Left cardiac atrium (tissue), 4 donors: ENCODE measurements at regions of chr18 and their contacts with region 1.

Region 1: GRCh38 chr18:48675352-48675761 is 136.5 kb downstream of the CTIF start:
- DNase-seq: peak; percentile 90
- ATAC-seq: peak; percentile 88 to 91

Region 2: GRCh38 chr18:48762836-48763718 is 87.7 kb after region 1 on chr18:
- intact Hi-C with region 1: no loop called
- DNase-seq: no peak
- ATAC-seq: peak; percentile 9 to 36

Region 3: DNA sequence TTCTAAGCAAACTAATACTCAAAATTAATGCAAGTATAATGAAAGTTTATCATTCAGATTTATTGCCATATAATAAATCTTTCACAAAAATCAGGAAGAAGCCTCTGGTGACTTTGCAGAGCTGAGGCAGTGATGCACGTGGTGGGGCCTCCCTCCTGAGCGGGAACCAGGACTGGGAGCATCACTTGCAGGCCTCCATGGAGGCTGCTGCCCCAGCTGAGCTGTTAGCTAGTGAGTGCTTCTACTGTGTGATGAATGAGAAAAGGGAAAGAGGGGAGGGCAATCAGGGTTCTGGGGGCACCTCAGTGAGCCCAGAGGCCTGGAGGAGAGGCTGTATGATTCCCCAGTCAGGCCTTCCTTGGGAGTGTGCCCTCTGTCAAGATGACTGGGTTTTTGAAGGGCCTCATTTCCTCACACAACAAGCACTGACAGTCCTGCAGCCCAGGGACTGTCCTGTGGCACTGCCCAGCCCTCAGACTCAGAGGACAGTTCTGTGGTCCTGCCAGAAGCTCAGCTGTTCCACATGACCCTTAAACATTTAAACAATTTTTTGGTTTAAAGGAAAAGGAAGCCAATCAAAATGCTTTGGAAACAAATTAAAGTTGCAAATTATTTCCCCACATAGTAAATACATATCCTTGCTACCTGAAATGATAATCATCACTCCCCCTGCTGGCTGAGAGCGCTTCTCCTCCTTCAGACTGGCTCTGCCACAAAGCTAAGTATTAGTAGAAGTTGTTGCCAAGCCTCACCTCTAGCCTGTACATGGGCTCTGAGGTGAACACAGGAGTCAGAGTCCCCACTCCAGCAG is 366.3 kb after region 1 on chr18:
- intact Hi-C with region 1: loop called in 1 of 2 experiments (anchors 10 kb)
- DNase-seq: peak; percentile 51
- ATAC-seq: peak; percentile 73 to 78

Region 4: GRCh38 chr18:49189772-49190171 is 514.4 kb after region 1 on chr18:
- intact Hi-C with region 1: loop called in 1 of 2 experiments (anchors 10 kb)
- DNase-seq: no peak
- ATAC-seq: peak in 1 of 2 donors; percentile 38

Region 5: GRCh38 chr18:49249521-49249920 is 574.2 kb after region 1 on chr18:
- intact Hi-C with region 1: loop called in 1 of 2 experiments (anchors 10 kb)
- DNase-seq: no peak
- ATAC-seq: peak in 1 of 2 donors; percentile 85

Region 6: GRCh38 chr18:49447810-49448745 is 772.7 kb after region 1 on chr18:
- intact Hi-C with region 1: loop called in 1 of 2 experiments (anchors 10 kb)
- DNase-seq: no peak
- ATAC-seq: peak; percentile 49 to 74